ENCODE measurements at regions of chr2 and their contacts with region 1.

Region 1: DNA sequence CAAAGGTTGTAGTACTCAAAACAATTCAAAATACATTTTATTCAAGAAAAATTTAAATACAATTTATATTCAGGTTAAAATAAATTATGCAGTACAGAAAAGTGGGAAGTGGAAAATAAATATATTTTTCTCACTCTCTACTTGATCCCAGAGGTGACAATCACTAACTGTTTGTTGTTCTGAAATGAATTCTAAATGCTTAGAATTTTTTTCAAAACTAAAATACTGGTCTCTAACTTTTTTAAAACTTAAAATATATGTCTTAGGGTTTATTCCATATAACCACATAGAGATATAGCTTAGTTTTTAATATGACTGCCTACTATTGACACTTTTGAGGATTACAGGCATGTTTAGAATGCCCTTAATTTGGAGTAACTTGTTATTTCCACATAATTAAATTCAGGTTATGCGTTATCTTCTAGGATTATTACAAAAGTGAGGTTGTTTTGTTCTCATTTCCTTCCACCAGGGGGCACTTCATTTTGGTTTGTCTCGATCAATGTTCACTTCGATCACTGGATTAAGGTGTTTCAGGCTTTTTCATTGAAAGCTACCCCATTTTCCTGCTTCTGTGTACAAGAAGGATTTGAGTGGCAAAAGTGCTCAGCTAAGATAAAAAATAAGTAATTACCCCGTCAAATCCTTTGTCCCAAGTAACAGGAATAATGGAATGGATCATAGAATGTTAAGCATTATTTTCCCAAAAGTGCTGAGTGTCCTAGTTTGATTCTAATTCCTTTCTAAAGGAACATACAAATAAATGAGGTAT is 27.1 kb upstream of the TFPI start:
- DNase-seq: no peak
- H3K4me3 ChIP-seq: peak overlapping the region in 1 of 2 donors; percentile 18
- H3K27ac ChIP-seq: no peak overlapping the region
- H3K4me1 ChIP-seq: peaks cover 11% of the 10 kb centered on the region
- H3K27me3 ChIP-seq: no peaks in the 10 kb centered on the region
- CTCF ChIP-seq: peak; percentile 59 to 75 (median 74)
- POLR2A ChIP-seq: no peak

Region 2: GRCh38 chr2:188512456-188512855 is 931.1 kb after region 1 on chr2:
- intact Hi-C with region 1: loop called (anchors 10 kb)
- DNase-seq: no peak
- H3K4me3 ChIP-seq: no peak overlapping the region
- H3K27ac ChIP-seq: no peak overlapping the region
- H3K4me1 ChIP-seq: no peaks in the 10 kb centered on the region
- H3K27me3 ChIP-seq: no peaks in the 10 kb centered on the region
- CTCF ChIP-seq: peak in 2 of 3 experiments; percentile 40 to 49
- POLR2A ChIP-seq: no peak

Measured in vagina (tissue), 2 donors.